Activated naive CD8-positive, alpha-beta T cell treated with anti-CD3 and anti-CD28 coated beads, Interleukin-2, amount 10 ng/mL, durations not matched to agents 7 days and 5 days (primary cell): ENCODE measurements at regions of chr2 and their contacts with region 1.

Region 1: GRCh38 chr2:127563458-127564428 is 28.3 kb downstream of the MYO7B start:
- DNase-seq: peak; percentile 53
- ATAC-seq: peak; percentile 96
- H3K4me3 Mint-ChIP-seq: peak overlapping the region; percentile 87
- H3K27ac Mint-ChIP-seq: peak overlapping the region; percentile 99
- H3K4me1 Mint-ChIP-seq: peaks cover 23% of the 10 kb centered on the region
- H3K27me3 Mint-ChIP-seq: peaks cover 5% of the 10 kb centered on the region

Region 2: GRCh38 chr2:127526149-127527000 is 37.4 kb before region 1 on chr2 and contains the start of gene IWS1:
- POLR2A ChIA-PET with region 1: interaction called, 27 read pairs
- DNase-seq: peak; percentile 91
- ATAC-seq: peak; percentile 91
- H3K4me3 Mint-ChIP-seq: peak within 1 kb of the TSS; percentile 96
- H3K27ac Mint-ChIP-seq: peak within 1 kb of the TSS; percentile 92
- H3K4me1 Mint-ChIP-seq: peaks cover 22% of the 10 kb centered on the region
- H3K27me3 Mint-ChIP-seq: peaks cover 6% of the 10 kb centered on the region
- total RNA-seq, gene IWS1: 53.1 to 59.6 TPM

Region 3: GRCh38 chr2:127576433-127577207 is 12.9 kb after region 1 on chr2:
- POLR2A ChIA-PET with region 1: interaction called, 19 read pairs
- DNase-seq: peak; percentile 23
- ATAC-seq: no peak
- H3K4me3 Mint-ChIP-seq: no peak overlapping the region
- H3K27ac Mint-ChIP-seq: peak overlapping the region; percentile 76
- H3K4me1 Mint-ChIP-seq: peaks cover 29% of the 10 kb centered on the region
- H3K27me3 Mint-ChIP-seq: peaks cover 3% of the 10 kb centered on the region

Region 4: DNA sequence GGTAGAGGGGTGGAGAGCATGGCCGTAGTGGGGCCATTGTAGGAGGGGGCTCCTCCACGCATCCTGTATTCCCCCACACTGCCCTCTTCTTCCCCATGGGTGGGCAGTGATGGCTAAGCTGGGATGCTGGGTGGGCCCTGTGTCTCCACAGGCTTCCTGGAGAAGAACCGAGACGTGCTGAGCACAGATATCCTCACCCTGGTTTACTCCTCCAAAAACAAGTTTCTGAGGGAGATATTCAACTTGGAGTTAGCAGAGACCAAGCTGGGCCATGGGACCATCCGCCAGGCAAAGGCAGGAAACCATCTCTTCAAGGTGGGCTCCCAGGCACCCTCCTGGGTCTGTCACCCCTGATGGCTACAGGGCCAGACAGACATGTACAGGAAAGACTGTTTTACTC is 24.5 kb after region 1 on chr2:
- POLR2A ChIA-PET with region 1: no interaction called
- DNase-seq: no peak
- ATAC-seq: no peak
- H3K4me3 Mint-ChIP-seq: no peak overlapping the region
- H3K27ac Mint-ChIP-seq: no peak overlapping the region
- H3K4me1 Mint-ChIP-seq: no peaks in the 10 kb centered on the region
- H3K27me3 Mint-ChIP-seq: no peaks in the 10 kb centered on the region

Region 5: GRCh38 chr2:127623388-127624245 is 59.9 kb after region 1 on chr2:
- POLR2A ChIA-PET with region 1: no interaction called
- DNase-seq: no peak
- ATAC-seq: no peak
- H3K4me3 Mint-ChIP-seq: no peak overlapping the region
- H3K27ac Mint-ChIP-seq: no peak overlapping the region
- H3K4me1 Mint-ChIP-seq: peaks cover 2% of the 10 kb centered on the region
- H3K27me3 Mint-ChIP-seq: no peaks in the 10 kb centered on the region